PC-9 (cell line): ENCODE measurements at regions of chr2 and their contacts with region 1.

Region 1: DNA sequence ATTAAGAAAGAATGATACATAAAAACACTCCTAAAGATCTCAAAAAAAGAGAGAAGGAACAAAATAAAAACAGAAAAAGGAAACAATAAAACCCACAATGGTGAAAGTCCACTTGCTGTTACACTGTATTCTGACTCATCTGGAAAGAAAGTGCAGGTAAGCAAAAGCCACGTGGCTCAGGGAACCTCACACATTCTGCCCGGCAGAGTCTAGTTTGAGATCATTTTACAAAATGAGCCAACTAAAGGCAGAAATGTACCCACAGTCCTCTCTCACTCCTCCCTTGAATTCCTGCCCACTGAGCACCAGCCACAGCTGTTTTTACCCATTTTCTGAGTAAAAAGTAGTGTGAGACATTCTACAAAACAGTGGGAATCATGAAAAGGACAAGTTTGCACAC is 10.0 kb downstream of the KCNH7 start:
- DNase-seq: no peak
- H3K4me3 ChIP-seq: no peak overlapping the region
- H3K27ac ChIP-seq: no peak overlapping the region
- H3K4me1 ChIP-seq: no peaks in the 10 kb centered on the region
- H3K27me3 ChIP-seq: no peaks in the 10 kb centered on the region
- CTCF ChIP-seq: no peak

Region 2: DNA sequence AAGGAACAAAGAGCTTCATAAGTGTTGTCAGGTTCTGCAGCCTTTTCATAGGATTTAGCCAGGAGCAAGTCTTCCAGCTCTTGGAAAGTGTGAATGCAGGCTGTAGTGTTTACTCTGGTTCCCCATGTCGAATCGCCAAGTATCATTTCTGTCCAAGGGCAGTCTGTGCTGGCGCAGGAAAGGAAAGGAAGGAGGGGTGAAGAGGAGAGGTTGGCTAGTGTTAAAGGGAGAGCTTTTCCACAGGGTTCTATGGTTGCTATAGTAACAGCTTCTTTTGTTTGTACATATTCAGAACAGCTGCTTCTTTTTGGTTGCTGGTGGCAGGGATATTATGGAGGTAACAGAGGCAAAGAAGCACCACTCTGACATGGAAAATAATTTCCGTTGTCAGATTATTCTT is 59.9 kb before region 1 on chr2:
- CTCF ChIA-PET with region 1: no interaction called
- POLR2A ChIA-PET with region 1: no interaction called
- intact Hi-C with region 1: no loop called
- DNase-seq: no peak
- H3K4me3 ChIP-seq: no peak overlapping the region
- H3K27ac ChIP-seq: no peak overlapping the region
- H3K4me1 ChIP-seq: no peaks in the 10 kb centered on the region
- H3K27me3 ChIP-seq: no peaks in the 10 kb centered on the region
- CTCF ChIP-seq: no peak

Region 3: DNA sequence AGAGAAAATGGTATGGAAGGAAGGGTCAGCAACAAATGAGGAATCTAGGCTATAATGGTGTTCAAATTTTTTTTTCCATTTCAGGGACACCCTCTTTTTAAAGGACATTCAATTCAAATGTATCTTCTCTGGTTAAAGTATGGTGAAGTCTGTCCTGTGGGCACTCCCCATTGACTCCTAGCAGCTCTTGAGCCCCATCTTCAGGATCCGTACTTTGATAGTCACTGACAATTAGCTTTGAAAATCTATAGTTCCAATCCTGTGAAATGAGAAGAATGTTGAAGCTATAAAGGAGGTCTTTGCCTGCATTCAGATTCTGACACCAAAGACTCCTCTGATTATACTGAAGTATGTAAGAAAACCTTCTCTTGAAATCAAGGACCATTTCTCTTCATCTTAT is 33.2 kb before region 1 on chr2:
- CTCF ChIA-PET with region 1: no interaction called
- POLR2A ChIA-PET with region 1: no interaction called
- intact Hi-C with region 1: no loop called
- DNase-seq: no peak
- H3K4me3 ChIP-seq: no peak overlapping the region
- H3K27ac ChIP-seq: no peak overlapping the region
- H3K4me1 ChIP-seq: no peaks in the 10 kb centered on the region
- H3K27me3 ChIP-seq: no peaks in the 10 kb centered on the region
- CTCF ChIP-seq: peak; percentile 38; the same call in 1 of the 2 replicates

Region 4: DNA sequence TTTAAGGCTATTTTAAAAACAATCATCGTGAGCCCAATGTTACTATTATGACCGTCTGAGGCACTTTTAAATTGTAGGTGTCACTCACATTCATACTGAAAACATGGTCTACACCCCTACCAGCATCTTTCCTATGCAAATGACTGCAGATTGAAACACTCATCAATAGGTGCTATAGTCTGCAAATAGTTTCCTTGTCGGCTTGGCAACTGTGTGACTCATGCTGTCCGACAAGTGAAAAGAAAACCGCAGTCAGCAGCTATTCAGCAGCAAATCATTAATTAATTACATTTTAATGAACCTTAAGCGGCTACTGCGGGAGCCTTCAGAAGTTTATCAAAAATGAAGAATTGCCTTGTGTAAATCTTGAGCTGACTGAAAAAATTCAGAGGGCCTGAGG is 772.8 kb after region 1 on chr2:
- CTCF ChIA-PET with region 1: no interaction called
- POLR2A ChIA-PET with region 1: interaction called, 27 read pairs
- intact Hi-C with region 1: no loop called
- DNase-seq: no peak
- H3K4me3 ChIP-seq: no peak overlapping the region
- H3K27ac ChIP-seq: no peak overlapping the region
- H3K4me1 ChIP-seq: no peaks in the 10 kb centered on the region
- H3K27me3 ChIP-seq: no peaks in the 10 kb centered on the region
- CTCF ChIP-seq: no peak